Activated T-helper 2 cell treated with anti-CD3 and anti-CD28 coated beads, Interferon-gamma antibody, Interleukin-2, Interleukin-4, amounts not matched to agents 10 μg/mL and 5 μg/mL and 100 μg/mL, durations not matched to agents 14 hours and 24 hours and 36 hours (primary cell): ENCODE measurements at regions of chr4 and their contacts with region 1.

Region 1: GRCh38 chr4:22389240-22389870 is 126.5 kb downstream of the ADGRA3 start:
- DNase-seq: peak; percentile 29
- H3K4me3 Mint-ChIP-seq: no peak overlapping the region
- H3K27ac Mint-ChIP-seq: no peak overlapping the region
- H3K4me1 Mint-ChIP-seq: peaks cover 17% of the 10 kb centered on the region
- H3K27me3 Mint-ChIP-seq: no peaks in the 10 kb centered on the region

Region 2: GRCh38 chr4:21790438-21791029 is 598.8 kb before region 1 on chr4:
- intact Hi-C with region 1: loop called (anchors 1 kb)
- DNase-seq: no peak
- H3K4me3 Mint-ChIP-seq: no peak overlapping the region
- H3K27ac Mint-ChIP-seq: no peak overlapping the region
- H3K4me1 Mint-ChIP-seq: no peaks in the 10 kb centered on the region
- H3K27me3 Mint-ChIP-seq: no peaks in the 10 kb centered on the region

Region 3: DNA sequence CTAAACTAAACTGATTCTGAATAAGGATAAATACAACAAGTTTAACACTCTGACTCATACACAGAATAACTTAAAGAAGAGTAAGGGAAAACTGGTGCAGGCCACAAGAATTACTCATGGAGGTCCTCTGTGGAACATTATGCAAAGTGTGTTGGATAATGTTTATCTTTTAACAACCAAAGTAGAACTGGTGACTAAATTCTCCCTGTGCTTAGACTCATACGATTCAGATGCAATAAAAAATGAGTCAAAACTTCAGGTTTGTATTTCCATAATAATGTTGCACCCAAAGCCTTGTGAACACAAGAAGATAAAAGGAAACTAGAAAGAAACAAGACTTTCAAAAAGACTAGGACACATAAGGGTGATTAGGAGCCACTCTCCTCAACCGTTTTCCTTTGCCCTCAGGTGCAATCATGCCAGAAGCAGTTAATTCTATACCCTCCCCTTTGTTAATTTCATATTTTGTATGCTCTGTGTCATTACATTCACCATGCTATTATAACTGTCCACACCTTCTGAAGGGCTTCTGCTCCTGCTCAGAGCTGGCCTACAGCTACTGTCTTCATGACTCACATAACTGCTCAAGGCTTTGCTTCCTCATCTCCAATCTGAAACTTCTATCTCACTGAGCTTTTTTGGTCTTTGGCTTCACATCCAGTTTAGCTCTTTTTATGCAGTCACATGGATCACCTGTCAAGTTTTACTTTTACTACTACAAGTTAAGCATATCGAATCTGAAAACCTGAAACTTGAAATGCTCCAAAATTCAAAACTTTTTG is 501.0 kb before region 1 on chr4:
- intact Hi-C with region 1: loop called (anchors 10 kb)
- DNase-seq: no peak
- H3K4me3 Mint-ChIP-seq: no peak overlapping the region
- H3K27ac Mint-ChIP-seq: peak overlapping the region; percentile 85
- H3K4me1 Mint-ChIP-seq: peaks cover 1% of the 10 kb centered on the region
- H3K27me3 Mint-ChIP-seq: no peaks in the 10 kb centered on the region

Region 4: GRCh38 chr4:22129454-22130029 is 259.8 kb before region 1 on chr4:
- intact Hi-C with region 1: loop called (anchors 1 kb)
- DNase-seq: peak; percentile 10
- H3K4me3 Mint-ChIP-seq: no peak overlapping the region
- H3K27ac Mint-ChIP-seq: no peak overlapping the region
- H3K4me1 Mint-ChIP-seq: no peaks in the 10 kb centered on the region
- H3K27me3 Mint-ChIP-seq: no peaks in the 10 kb centered on the region

Region 5: DNA sequence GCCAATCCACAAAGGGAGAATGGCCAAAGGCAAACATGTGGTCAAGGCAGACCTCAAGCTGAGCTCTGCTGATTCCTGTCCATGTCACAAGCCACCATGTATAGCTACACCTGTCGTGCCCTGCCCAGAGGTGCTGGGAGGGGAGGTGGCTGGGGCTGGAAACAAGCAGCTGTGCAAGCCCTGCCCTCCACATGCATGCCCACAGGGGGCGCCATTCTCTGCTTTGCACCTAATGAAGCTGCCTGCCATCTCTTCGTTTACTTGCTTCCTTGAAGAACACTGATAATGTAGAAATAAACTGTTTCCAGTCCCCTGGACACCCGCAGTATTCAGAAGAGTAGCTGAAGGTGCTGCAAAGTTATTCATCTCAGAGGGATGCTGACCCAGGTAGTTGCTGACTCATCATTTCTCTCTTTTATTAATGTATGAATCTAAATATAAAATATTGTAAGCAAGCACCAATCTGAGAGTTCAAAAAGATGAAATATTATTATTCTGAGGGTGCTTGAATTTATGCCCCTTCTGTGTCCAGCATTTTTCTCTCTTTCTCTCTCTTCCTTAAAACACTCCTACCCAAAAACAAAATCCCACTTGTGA is 152.1 kb before region 1 on chr4:
- intact Hi-C with region 1: loop called (anchors 1 kb)
- DNase-seq: peak; percentile 57
- H3K4me3 Mint-ChIP-seq: peak overlapping the region; percentile 64
- H3K27ac Mint-ChIP-seq: no peak overlapping the region
- H3K4me1 Mint-ChIP-seq: peaks cover 21% of the 10 kb centered on the region
- H3K27me3 Mint-ChIP-seq: no peaks in the 10 kb centered on the region

Region 6: DNA sequence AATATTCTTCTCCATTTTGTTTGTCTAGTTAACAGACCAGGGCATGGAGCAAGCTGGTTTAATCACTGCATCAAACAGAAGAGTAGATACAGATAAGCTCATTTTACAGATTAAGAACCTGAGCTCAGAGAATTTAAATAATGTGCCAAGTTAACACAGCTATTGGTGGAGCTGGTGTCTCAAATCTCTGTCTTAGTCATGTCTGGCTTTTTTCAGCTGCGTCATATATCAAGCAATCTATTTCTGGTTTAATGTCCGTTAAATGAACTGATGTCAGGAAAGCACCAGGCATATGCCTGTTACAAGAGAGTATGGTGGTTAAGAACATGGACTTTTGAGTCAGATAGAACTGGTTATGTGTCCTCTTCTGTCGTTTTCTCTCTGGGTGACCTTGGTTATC is 206.3 kb after region 1 on chr4:
- intact Hi-C with region 1: loop called (anchors 1 kb)
- DNase-seq: no peak
- H3K4me3 Mint-ChIP-seq: peak overlapping the region; percentile 7
- H3K27ac Mint-ChIP-seq: peak overlapping the region; percentile 59
- H3K4me1 Mint-ChIP-seq: peaks cover 18% of the 10 kb centered on the region
- H3K27me3 Mint-ChIP-seq: no peaks in the 10 kb centered on the region